Activated B cell treated with CpG ODN at 0.5 μM for 24 hours (primary cell): ENCODE measurements at regions of chr5 and their contacts with region 1.

Region 1: GRCh38 chr5:139968547-139969261 is 74.4 kb downstream of the NRG2 start:
- DNase-seq: peak; percentile 83
- ATAC-seq: peak; percentile 100
- H3K4me3 Mint-ChIP-seq: no peak overlapping the region
- H3K27ac Mint-ChIP-seq: no peak overlapping the region
- H3K4me1 Mint-ChIP-seq: no peaks in the 10 kb centered on the region
- H3K27me3 Mint-ChIP-seq: peaks cover 32% of the 10 kb centered on the region
- CTCF ChIP-seq: peak; percentile 47

Region 2: GRCh38 chr5:139787568-139788293 is 181.0 kb before region 1 on chr5:
- CTCF ChIA-PET with region 1: interaction called, 151 read pairs
- POLR2A ChIA-PET with region 1: no interaction called
- intact Hi-C with region 1: loop called (anchors 1 kb)
- DNase-seq: peak; percentile 92
- ATAC-seq: peak; percentile 93
- H3K4me3 Mint-ChIP-seq: peak overlapping the region; percentile 88
- H3K27ac Mint-ChIP-seq: no peak overlapping the region
- H3K4me1 Mint-ChIP-seq: peaks cover 11% of the 10 kb centered on the region
- H3K27me3 Mint-ChIP-seq: peaks cover 19% of the 10 kb centered on the region
- CTCF ChIP-seq: no peak

Region 3: DNA sequence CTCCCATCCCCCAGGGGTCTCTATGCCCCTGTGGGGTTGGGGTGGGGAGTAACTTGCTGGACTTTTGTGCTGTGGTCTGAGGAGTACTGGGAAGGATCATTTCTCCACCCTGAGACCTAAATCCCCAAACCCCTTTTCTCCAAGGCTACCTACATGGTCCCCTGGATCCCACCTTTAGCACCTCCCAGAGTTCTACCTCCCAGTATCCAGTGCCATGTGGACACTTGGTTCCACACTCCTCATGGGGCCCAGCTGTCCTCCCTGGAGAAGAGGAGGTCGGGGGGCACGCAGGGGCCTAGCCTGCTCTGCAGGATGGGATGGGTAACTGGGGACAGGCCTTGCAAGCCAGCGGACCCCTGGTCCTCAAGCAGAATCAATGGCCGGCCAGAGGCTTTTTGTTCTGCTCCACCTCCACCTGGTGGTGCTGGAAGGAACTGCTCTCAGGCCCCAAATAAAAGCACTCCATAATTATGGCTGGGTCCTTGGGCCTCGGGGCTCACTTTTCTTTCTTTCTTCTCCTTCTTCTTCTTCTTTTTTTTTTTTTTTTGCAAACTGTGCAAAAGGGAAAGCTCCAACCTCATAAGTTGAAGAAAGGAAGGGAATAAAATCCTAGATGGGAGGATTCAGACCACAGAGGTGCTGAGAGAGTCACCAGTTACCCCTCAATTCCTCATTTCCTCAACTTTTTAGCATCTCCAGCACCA is 104.7 kb before region 1 on chr5:
- CTCF ChIA-PET with region 1: interaction called, 5 read pairs
- POLR2A ChIA-PET with region 1: no interaction called
- intact Hi-C with region 1: loop called (anchors 1 kb)
- DNase-seq: peak; percentile 45
- ATAC-seq: peak; percentile 90
- H3K4me3 Mint-ChIP-seq: no peak overlapping the region
- H3K27ac Mint-ChIP-seq: no peak overlapping the region
- H3K4me1 Mint-ChIP-seq: peaks cover 5% of the 10 kb centered on the region
- H3K27me3 Mint-ChIP-seq: peaks cover 20% of the 10 kb centered on the region
- CTCF ChIP-seq: peak; percentile 64

Region 4: DNA sequence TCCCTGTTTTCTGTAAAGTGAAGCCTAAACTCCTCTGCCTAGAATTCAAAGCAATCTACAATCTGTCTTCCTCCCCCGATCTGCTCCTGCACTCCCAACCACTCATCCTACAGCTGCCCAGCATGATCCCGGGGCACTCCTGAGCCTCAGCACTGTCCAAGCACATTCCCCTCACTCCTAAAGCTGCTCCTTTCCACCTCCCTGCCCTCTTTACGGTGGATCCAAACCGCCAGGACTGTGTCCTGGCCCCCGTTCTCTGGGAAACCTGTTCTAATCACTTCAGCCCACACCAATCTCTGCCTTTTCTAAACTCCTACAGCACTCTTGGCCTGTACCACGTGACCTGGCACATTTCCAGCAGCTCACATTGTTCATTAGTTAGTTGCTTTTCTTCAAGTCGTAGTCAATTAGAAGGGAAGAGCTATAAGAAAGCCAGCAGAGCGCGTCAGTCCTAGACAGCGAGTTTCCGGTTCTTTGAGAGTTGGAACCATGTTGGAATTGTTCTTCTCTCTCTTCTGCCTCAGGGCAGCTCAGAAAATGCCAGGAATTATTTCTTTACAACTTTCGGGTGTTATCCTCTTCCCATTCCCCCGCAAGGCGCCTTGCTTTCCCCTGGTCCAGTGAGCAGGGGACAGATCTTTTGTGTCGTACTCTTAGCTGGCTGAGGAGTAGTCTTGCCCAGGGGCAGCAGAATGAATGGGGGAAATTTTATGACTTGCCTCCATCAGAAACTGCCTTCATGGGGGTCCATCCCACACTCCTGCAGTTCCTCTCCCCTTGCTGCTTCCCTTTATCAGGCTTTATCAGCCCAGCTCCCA is 13.7 kb after region 1 on chr5:
- CTCF ChIA-PET with region 1: interaction called, 10 read pairs
- POLR2A ChIA-PET with region 1: no interaction called
- intact Hi-C with region 1: no loop called
- DNase-seq: no peak
- ATAC-seq: no peak
- H3K4me3 Mint-ChIP-seq: no peak overlapping the region
- H3K27ac Mint-ChIP-seq: no peak overlapping the region
- H3K4me1 Mint-ChIP-seq: peaks cover 5% of the 10 kb centered on the region
- H3K27me3 Mint-ChIP-seq: peaks cover 28% of the 10 kb centered on the region
- CTCF ChIP-seq: no peak

Region 5: DNA sequence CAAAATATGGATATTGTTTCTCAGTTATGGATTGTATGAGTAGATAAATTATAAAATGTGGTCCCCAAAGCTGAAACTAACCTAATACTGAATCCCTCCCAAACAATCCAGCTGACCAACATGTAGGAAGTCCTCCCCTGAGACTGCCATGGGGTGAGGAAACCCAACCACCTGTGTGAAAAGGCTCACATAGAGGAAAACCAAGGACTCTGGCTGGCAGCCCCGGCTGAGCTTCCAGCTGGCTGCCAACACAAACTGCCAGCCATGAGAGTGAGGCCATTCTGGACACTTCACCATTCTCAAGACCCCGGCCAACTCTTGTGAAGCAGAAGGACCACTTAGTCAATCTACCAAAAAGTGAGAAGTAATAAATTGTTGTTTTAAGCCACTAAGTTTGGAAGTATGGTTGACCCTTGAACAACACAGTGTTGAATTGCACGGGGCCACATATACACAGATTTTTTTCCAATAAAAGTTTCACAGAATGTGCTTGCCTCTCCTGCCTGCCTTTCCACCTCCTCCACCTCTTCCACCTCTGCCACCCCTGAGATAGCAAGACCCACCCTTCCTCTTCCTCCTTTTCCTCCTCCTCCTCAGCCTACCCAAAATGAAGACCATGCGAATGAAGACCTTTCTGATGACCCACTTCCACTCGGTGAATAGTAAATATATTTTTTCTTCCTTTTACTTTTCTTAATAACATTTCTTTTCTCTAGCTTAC is 89.7 kb after region 1 on chr5:
- CTCF ChIA-PET with region 1: no interaction called
- POLR2A ChIA-PET with region 1: no interaction called
- intact Hi-C with region 1: no loop called
- DNase-seq: no peak
- ATAC-seq: no peak
- H3K4me3 Mint-ChIP-seq: no peak overlapping the region
- H3K27ac Mint-ChIP-seq: no peak overlapping the region
- H3K4me1 Mint-ChIP-seq: no peaks in the 10 kb centered on the region
- H3K27me3 Mint-ChIP-seq: peaks cover 13% of the 10 kb centered on the region
- CTCF ChIP-seq: no peak